Ascending aorta (tissue), 2 donors: ENCODE measurements at regions of chr3 and their contacts with region 1.

Region 1: DNA sequence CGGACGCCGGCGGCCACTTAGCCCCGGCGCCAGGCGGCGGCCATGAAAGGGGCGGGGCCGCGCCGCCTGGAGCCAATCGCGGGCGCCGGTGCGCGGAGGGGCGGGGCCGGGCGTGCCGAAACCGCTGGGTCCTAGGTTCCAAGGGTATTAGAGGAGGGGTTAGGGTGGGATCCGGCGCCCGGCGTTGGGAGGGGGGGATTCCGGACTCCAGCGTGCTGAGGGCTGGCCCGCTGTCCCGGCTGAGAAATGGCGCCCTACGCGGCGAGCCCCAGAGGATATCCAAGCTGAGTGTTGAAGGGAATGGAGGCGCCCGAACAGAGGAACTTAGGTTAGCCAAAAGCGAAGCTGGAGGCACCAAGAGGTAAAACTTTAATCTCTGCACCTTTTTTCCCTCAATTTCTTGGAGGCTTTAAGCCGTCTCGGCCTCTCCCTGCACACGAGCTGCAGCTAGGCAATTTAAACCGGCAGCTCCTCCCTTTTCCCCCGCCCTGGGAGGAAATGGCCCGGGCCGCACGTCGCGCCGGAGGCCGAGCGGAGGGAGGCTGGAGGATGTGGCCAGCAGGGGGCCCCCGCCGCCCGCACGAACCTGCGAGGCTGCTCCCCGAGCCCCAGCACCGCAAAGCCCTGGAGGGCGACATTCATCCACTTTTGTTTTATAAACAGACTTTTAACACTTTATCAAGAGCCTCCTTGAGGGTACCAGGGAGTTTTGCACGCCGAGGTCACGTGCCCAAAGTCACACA is at the start of gene XXYLT1:
- DNase-seq: peak; percentile 27 to 91
- H3K4me3 ChIP-seq: peak within 1 kb of the TSS; percentile 67 to 90
- H3K27ac ChIP-seq: peak within 1 kb of the TSS; percentile 70 to 82
- H3K4me1 ChIP-seq: peaks cover 0 to 14% of the 10 kb centered on the region in 2 donors
- H3K27me3 ChIP-seq: no peaks in the 10 kb centered on the region
- CTCF ChIP-seq: peak; percentile 91 to 97 (median 94)
- total RNA-seq, gene XXYLT1: 41.0 TPM

Region 2: DNA sequence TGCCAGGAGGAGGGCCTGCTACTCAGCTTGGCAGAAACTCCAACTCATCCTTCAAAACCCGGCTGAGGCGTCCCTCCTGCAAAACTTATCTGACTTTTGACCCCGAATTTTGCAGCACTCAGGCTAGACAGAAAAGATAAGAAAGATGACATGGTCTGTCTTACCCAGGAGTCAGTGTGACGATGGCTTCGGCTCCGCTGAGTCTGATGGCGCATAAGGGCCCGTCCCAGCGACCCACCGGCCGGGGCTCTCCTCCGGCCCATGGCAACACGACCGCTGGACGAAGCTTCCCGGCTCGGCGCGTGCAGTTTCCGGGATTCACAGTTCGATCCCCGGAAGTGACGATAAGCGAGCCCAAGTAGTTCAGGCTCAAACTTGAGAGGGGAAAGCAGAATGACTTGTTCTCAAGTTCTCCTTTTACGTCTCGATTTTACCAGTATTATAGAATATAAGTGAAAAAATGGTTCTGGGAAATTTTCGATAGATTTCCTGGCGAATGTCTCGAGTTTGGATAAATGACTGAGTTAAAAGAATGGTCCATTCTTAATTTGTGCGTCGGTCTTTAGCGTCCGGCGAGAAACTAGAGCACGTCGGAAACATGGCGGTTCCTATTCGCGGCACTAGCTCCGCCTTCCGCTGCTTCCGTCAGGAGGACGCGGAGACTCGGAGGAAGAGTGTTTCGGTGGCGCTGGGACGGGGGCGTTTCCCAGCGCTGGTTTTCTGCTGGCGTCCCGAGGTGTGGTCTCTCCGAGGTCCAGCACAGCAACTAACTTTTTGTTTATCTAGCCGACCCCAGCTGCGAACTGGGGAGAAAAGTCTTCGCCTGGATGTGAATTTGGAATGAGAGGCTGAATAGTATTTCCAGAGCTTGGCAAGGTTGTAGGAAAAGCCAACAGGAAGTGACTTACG is 599.1 kb before region 1 on chr3 and contains the start of gene LSG1:
- intact Hi-C with region 1: loop called (anchors 5 kb)
- DNase-seq: peak; percentile 44 to 95
- H3K4me3 ChIP-seq: peak within 1 kb of the TSS; percentile 80 to 96
- H3K27ac ChIP-seq: peak within 1 kb of the TSS; percentile 83 to 89
- H3K4me1 ChIP-seq: peaks cover 0 to 10% of the 10 kb centered on the region in 2 donors
- H3K27me3 ChIP-seq: no peaks in the 10 kb centered on the region
- CTCF ChIP-seq: no peak
- total RNA-seq, gene LSG1: 9.4 TPM

Region 3: DNA sequence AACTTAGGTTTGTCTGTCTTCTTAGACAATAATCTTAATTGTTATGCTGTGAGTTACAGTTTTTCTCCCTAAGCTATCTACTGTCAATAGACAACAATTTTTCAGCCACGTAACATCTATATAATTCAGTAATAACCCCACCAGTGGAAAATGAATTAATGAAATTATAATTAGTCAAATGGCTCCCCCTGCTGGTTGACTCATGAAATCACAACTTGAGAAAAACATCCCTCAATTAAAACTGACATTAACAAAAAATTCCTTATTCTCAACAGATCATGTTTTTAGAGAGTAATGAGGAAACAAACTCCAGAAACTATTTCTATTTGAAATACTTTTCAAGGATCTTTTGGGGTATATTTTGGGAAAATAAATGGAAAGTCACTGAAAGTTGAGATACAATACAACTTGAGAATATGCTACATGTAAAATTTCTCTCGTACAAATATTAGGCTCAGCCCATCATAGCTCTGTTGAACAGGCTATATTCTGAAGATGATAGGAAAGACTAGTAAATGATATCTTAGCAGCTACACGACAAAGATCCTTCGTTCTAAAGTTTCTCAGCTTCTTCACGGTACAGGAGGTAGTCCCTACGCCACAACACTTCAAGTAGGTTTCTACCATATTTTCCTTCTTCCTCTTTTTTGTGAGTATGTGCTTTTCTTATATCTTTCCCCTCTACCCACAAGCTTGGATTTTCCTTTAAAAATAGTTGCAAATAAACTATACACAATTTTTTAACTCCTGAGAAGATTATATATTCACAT is 251.2 kb after region 1 on chr3:
- intact Hi-C with region 1: loop called (anchors 1 kb)
- DNase-seq: no peak
- H3K4me3 ChIP-seq: no peak overlapping the region
- H3K27ac ChIP-seq: no peak overlapping the region
- H3K4me1 ChIP-seq: no peaks in the 10 kb centered on the region
- H3K27me3 ChIP-seq: no peaks in the 10 kb centered on the region
- CTCF ChIP-seq: peak; percentile 66 to 70 (median 69)

Region 4: DNA sequence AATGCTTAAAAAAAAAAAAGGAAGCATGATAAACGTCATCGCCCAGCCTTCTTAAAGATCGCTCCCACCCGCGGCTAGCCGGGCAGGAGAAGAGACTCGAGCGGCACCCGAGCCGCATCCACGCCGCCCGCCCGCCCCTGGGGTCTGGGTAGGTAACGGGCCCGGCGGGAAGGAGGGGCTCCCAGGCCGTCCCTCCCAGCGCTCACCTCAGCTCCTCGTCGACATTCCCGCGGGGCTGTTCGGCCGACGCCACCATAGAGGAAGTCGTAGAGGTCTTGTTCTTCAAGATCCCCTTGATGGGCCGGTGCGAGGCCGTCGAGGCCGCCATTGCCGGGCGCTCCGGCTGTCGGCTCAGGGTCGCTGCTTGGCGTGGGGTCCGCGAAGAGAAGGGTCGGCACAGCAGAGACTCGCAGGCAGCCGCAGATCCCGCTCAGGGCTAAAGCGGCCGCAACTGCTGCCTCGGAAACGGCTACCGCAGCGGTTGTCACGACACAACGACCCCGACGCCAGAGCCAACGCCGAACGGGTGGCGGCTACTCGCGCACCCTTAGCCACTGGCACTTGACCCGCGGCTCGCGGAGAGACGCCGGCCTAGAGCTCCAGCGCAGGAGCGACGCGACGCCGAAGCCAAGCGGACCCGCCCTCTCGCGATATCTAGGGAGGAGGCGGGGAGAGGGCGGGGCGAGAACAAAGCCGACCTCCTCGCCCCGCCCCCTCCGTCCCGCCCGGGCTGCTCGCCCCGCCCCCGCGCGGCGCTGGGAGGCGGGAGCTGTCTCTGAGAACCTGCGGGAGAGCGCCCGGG is 271.6 kb after region 1 on chr3 and contains the start of gene PPP1R2:
- intact Hi-C with region 1: loop called (anchors 5 kb)
- DNase-seq: peak; percentile 51 to 95
- H3K4me3 ChIP-seq: peak within 1 kb of the TSS; percentile 78 to 83
- H3K27ac ChIP-seq: peak within 1 kb of the TSS; percentile 87 to 93
- H3K4me1 ChIP-seq: peaks cover 21 to 48% of the 10 kb centered on the region in 2 donors
- H3K27me3 ChIP-seq: no peaks in the 10 kb centered on the region
- CTCF ChIP-seq: no peak
- total RNA-seq, gene PPP1R2: 62.3 TPM

Region 5: GRCh38 chr3:195802785-195803184 is 531.5 kb after region 1 on chr3:
- intact Hi-C with region 1: no loop called
- DNase-seq: no peak
- H3K4me3 ChIP-seq: peak overlapping the region in 1 of 2 donors; percentile 12
- H3K27ac ChIP-seq: no peak overlapping the region
- H3K4me1 ChIP-seq: no peaks in the 10 kb centered on the region
- H3K27me3 ChIP-seq: no peaks in the 10 kb centered on the region
- CTCF ChIP-seq: no peak

Region 6: DNA sequence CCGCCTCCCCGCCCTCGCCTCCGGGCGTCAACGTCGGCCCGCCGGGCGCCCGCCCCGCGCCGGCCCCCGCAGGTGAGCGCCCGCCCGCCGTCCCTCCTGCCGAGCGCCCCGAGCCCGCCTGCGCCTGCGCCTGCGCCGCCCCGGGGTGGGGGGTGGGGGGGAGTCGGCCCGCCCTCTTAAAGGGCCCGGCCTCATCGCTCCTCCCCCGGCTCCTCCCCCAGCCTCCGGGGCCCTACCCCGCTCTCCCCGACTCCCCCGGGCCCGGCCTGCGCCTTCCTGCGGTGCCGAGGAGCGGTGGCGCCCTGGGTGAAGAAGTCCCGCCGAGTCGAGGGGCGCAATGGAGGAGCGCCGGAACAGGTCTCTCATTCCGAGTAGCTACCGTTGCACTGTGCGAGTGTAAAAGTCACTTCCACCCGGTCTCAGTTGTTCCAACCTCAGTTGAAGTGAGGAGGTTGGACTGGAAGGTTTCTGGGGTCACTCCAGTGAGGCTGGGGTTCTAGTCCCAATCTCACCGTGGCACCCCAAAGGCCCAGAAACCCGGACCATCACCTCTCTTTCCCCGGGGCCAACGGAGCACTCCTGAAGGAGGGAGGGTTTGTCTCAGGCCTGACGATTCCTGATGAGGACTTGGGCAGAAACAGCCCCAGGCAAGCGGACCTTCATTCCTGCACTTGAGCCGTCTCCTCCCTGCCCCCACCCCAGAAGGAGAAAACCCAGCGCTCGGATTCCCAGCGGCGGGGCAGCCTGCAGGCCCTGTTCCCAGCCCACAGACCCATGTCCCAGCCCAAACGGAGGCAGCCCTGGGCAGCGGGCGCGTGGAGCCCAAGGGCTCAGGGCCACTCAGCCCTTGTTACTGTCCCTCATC is 638.6 kb after region 1 on chr3:
- intact Hi-C with region 1: loop called (anchors 10 kb)
- DNase-seq: peak in 1 of 2 donors; percentile 90
- H3K4me3 ChIP-seq: peak overlapping the region; percentile 76 to 84
- H3K27ac ChIP-seq: peak overlapping the region; percentile 56 to 70
- H3K4me1 ChIP-seq: peaks cover 6 to 21% of the 10 kb centered on the region in 2 donors
- H3K27me3 ChIP-seq: no peaks in the 10 kb centered on the region
- CTCF ChIP-seq: no peak